ENCODE measurements at regions of chr2 and their contacts with region 1.

Region 1: DNA sequence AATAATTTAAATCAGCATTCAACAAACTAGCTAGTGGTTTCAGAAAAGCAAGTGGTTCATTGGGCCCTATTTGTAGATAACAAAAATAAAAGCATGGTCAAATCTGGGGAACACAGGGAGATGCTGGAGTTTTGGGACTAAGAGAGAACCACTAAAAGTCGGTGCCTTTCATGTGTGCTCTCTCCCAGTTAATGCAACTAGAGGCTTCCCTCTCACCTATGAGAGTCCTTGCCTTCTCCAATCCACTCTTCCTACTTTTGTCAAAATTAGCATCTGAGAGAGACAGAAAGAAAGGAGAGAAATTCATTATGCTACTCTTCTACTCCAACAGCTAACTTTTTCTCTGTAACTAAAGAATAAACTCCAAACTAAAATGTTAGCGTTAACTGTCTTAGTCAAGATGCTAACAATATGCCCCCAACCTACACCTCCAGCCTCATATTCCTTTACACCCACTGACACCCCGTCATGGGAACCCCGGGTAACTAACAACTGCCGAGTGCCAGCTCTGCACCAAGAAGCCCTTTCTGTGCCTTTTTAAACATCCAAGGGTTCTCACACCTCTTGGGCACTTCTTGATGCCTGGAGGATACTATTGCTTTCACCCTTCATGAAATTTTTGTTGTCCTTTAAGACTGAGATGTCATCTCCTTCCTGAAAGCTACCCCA is 133.4 kb downstream of the RBMS1 start:
- DNase-seq: no peak
- ATAC-seq: no peak
- H3K4me3 ChIP-seq: no peak overlapping the region
- H3K4me3 Mint-ChIP-seq: peak overlapping the region in 2 of 10 donors; percentile 10 to 56
- H3K27ac ChIP-seq: no peak overlapping the region
- H3K27ac Mint-ChIP-seq: peak overlapping the region in 5 of 9 donors; percentile 9 to 78 (median 20)
- H3K4me1 ChIP-seq: peaks cover 0 to 4% of the 10 kb centered on the region in 2 donors
- H3K4me1 Mint-ChIP-seq: peaks cover 35 to 91% (median 74%) of the 10 kb centered on the region in 7 donors
- H3K27me3 ChIP-seq: no peaks in the 10 kb centered on the region
- H3K27me3 Mint-ChIP-seq: no peaks in the 10 kb centered on the region

Region 2: GRCh38 chr2:160345071-160345764 is 15.0 kb before region 1 on chr2:
- CTCF ChIA-PET with region 1: no interaction called
- POLR2A ChIA-PET with region 1: no interaction called
- intact Hi-C with region 1: loop called in 1 of 2 experiments (anchors 2 kb)
- DNase-seq: no peak
- ATAC-seq: peak; percentile 22
- H3K4me3 ChIP-seq: no peak overlapping the region
- H3K4me3 Mint-ChIP-seq: peak overlapping the region in 9 of 10 donors; percentile 8 to 84 (median 45)
- H3K27ac ChIP-seq: no peak overlapping the region
- H3K27ac Mint-ChIP-seq: peak overlapping the region; percentile 3 to 89 (median 25)
- H3K4me1 ChIP-seq: peaks cover 8 to 17% of the 10 kb centered on the region in 2 donors
- H3K4me1 Mint-ChIP-seq: peaks cover 35 to 95% (median 93%) of the 10 kb centered on the region in 7 donors
- H3K27me3 ChIP-seq: no peaks in the 10 kb centered on the region
- H3K27me3 Mint-ChIP-seq: no peaks in the 10 kb centered on the region